K562 (cell line): ENCODE measurements at regions of chr3 and their contacts with region 1.

Region 1: GRCh38 chr3:72270072-72270681 is 485.2 kb upstream of the PROK2 start:
- DNase-seq: peak; percentile 68 to 88 (median 74)
- ATAC-seq: peak; percentile 82
- H3K4me3 ChIP-seq: no peak overlapping the region
- H3K27ac ChIP-seq: peak overlapping the region; percentile 78
- H3K4me1 ChIP-seq: peaks cover 13 to 56% of the 10 kb centered on the region in 2 experiments; a peak in 4 of 5 replicates
- H3K27me3 ChIP-seq: no peaks in the 10 kb centered on the region
- CTCF ChIP-seq: no peak
- EP300 ChIP-seq: peak; percentile 81
- POLR2A ChIP-seq: no peak
- RAD21 ChIP-seq: peak; percentile 24 to 34; a peak in 3 of 4 replicates

Region 2: GRCh38 chr3:71710906-71711494 is 559.2 kb before region 1 on chr3:
- CTCF ChIA-PET with region 1: no interaction called
- POLR2A ChIA-PET with region 1: no interaction called
- in situ Hi-C with region 1: no loop called
- intact Hi-C with region 1: loop called (anchors 10 kb)
- DNase-seq: peak; percentile 27 to 45 (median 40)
- ATAC-seq: peak; percentile 73
- H3K4me3 ChIP-seq: no peak overlapping the region
- H3K27ac ChIP-seq: no peak overlapping the region
- H3K4me1 ChIP-seq: no peaks in the 10 kb centered on the region
- H3K27me3 ChIP-seq: peaks cover 2 to 8% of the 10 kb centered on the region in 2 experiments; a peak in 3 of 5 replicates
- CTCF ChIP-seq: peak; percentile 40 to 74 (median 60); a peak in 5 of 6 replicates
- EP300 ChIP-seq: no peak
- POLR2A ChIP-seq: no peak
- RAD21 ChIP-seq: peak; percentile 81 to 86

Region 3: DNA sequence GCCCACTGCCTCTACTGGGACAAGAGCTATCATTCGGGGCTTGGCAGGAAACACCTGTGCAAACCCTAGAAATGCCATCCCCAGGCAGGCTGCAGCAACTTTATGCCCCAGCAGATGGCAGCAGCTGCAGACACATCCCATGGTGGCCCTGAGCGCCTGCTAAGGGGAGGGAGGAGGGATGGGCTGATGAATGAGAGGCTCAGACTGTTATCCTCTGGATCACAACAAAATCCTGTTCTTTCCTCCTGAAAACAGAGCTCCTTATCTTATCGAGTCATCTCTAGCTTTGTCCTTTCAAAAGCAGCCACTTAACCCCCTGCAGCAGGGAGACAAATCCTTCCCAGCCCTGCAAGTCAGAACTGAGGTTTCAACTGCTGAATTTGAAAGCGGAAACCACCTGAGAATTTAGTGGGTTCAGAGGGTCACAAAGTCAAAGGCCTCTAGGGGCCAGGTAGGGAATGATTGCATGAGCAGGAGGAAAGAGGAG is 394.7 kb before region 1 on chr3:
- CTCF ChIA-PET with region 1: interaction called, 3 read pairs
- POLR2A ChIA-PET with region 1: no interaction called
- in situ Hi-C with region 1: no loop called
- intact Hi-C with region 1: loop called (anchors 1 kb)
- DNase-seq: peak; percentile 61 to 70 (median 64)
- ATAC-seq: peak; percentile 96
- H3K4me3 ChIP-seq: no peak overlapping the region
- H3K27ac ChIP-seq: no peak overlapping the region
- H3K4me1 ChIP-seq: no peaks in the 10 kb centered on the region
- H3K27me3 ChIP-seq: peaks cover 0 to 2% of the 10 kb centered on the region in 2 experiments; a peak in 1 of 5 replicates
- CTCF ChIP-seq: peak; percentile 73 to 88 (median 83)
- EP300 ChIP-seq: peak; percentile 13; the same call in 1 of the 2 replicates
- POLR2A ChIP-seq: no peak
- RAD21 ChIP-seq: peak; percentile 90 to 91

Region 4: DNA sequence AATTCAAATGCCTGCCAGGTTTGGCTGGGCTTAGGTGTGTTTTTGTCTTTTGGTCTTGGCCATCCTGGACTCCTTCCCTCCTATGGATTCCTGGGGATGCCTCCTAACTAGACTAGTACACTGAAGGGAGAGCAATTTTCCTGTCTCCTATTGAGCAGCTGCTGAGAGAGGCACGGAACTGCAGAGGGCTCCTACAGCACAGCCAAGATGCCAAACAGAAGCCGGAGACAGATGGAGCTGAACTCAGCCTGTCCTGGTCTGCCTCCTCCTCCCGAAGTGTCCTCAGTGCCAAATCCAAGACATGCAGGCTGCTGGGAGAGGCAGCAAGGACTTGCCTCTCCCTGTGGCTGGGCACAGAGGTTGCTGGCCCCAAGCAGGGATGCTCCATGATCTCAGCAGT is 228.7 kb before region 1 on chr3:
- CTCF ChIA-PET with region 1: no interaction called
- POLR2A ChIA-PET with region 1: no interaction called
- in situ Hi-C with region 1: no loop called
- intact Hi-C with region 1: no loop called
- DNase-seq: no peak
- ATAC-seq: no peak; the same call in 2 of the 3 replicates
- H3K4me3 ChIP-seq: no peak overlapping the region
- H3K27ac ChIP-seq: no peak overlapping the region
- H3K4me1 ChIP-seq: peaks cover 0 to 14% of the 10 kb centered on the region in 2 experiments; a peak in 3 of 5 replicates
- H3K27me3 ChIP-seq: no peaks in the 10 kb centered on the region
- CTCF ChIP-seq: no peak
- EP300 ChIP-seq: no peak
- POLR2A ChIP-seq: no peak
- RAD21 ChIP-seq: no peak

Region 5: DNA sequence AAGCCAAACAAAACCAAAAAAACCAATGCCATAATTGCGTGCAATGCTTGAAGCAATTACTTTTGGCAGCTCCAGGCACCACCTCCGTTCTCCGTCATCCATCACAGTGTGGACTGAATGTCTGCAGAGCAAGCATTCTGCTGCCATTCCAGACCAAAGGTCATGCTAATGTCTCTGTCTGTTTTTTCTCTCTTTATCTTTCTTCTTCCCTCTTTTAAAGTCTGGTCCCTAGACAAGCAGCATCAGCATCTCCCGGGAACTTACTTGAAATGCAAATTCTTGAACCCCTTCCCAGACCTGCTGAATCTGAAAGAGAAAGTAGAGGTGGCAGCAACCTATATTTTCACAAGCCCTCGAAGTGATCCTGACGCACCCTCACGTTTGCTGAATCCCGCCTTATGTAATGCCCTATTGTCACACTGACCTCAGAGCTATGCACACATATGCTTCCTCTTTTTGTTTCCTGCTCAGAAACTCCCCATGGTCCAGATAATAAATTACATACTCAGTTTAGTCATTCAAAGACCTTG is 187.9 kb before region 1 on chr3:
- CTCF ChIA-PET with region 1: no interaction called
- POLR2A ChIA-PET with region 1: interaction called, 6 read pairs
- in situ Hi-C with region 1: no loop called
- intact Hi-C with region 1: loop called (anchors 5 kb)
- DNase-seq: no peak
- ATAC-seq: no peak
- H3K4me3 ChIP-seq: no peak overlapping the region
- H3K27ac ChIP-seq: no peak overlapping the region
- H3K4me1 ChIP-seq: peaks cover 24 to 47% of the 10 kb centered on the region in 2 experiments
- H3K27me3 ChIP-seq: no peaks in the 10 kb centered on the region
- CTCF ChIP-seq: no peak
- EP300 ChIP-seq: no peak
- POLR2A ChIP-seq: no peak
- RAD21 ChIP-seq: no peak

Region 6: GRCh38 chr3:72185549-72186399 is 84.4 kb before region 1 on chr3:
- CTCF ChIA-PET with region 1: no interaction called
- POLR2A ChIA-PET with region 1: no interaction called
- in situ Hi-C with region 1: no loop called
- intact Hi-C with region 1: loop called (anchors 5 kb)
- DNase-seq: peak; percentile 63 to 84 (median 72)
- ATAC-seq: peak; percentile 86
- H3K4me3 ChIP-seq: no peak overlapping the region
- H3K27ac ChIP-seq: peak overlapping the region; percentile 29; the same call in 2 of the 3 replicates
- H3K4me1 ChIP-seq: peaks cover 11 to 61% of the 10 kb centered on the region in 2 experiments
- H3K27me3 ChIP-seq: no peaks in the 10 kb centered on the region
- CTCF ChIP-seq: no peak
- EP300 ChIP-seq: peak; percentile 78
- POLR2A ChIP-seq: no peak
- RAD21 ChIP-seq: peak; percentile 13 to 19; a peak in 1 of 4 replicates

Region 7: GRCh38 chr3:72339116-72340030 is 69.2 kb after region 1 on chr3:
- CTCF ChIA-PET with region 1: no interaction called
- POLR2A ChIA-PET with region 1: no interaction called
- in situ Hi-C with region 1: no loop called
- intact Hi-C with region 1: loop called (anchors 5 kb)
- DNase-seq: peak; percentile 82 to 87 (median 84)
- ATAC-seq: peak; percentile 73
- H3K4me3 ChIP-seq: no peak overlapping the region
- H3K27ac ChIP-seq: peak overlapping the region; percentile 73; the same call in 2 of the 3 replicates
- H3K4me1 ChIP-seq: peaks cover 41 to 45% of the 10 kb centered on the region in 2 experiments
- H3K27me3 ChIP-seq: no peaks in the 10 kb centered on the region
- CTCF ChIP-seq: no peak
- EP300 ChIP-seq: peak; percentile 58; the same call in 1 of the 2 replicates
- POLR2A ChIP-seq: no peak
- RAD21 ChIP-seq: no peak

Region 8: DNA sequence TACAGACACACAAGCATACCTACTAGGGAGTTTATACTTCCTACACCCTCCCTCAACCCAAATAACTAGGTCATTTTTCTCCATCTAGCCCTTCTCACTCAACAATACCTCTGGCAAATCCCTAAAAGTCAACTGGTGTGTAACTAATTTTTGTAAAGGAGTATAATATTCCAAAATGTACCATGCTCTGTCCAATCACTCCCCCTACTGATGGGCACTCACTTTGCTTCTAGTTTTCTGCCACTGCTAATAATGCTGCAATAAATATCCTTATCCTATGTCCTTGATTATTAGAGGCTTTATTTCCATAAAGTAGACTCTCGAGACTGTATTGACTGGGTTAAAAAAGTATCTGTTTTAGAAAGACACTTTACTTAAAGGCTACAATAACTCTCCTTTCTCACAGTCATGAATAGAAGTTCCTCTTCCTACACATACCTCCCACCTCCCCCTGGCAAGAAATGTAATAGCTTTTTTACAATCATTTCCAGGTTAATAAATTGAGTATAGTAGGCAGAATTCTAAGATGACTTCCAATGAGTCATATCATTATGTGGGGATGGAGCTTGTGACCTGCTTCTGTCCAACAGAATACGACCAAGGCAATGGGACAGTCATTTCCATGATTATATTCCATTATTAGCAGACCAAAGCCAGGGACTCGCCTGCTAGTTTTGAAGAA is 548.1 kb after region 1 on chr3:
- CTCF ChIA-PET with region 1: no interaction called
- POLR2A ChIA-PET with region 1: no interaction called
- in situ Hi-C with region 1: no loop called
- intact Hi-C with region 1: loop called (anchors 10 kb)
- DNase-seq: peak in 1 of 4 experiments; percentile 12
- ATAC-seq: peak; percentile 50; the same call in 1 of the 3 replicates
- H3K4me3 ChIP-seq: no peak overlapping the region
- H3K27ac ChIP-seq: no peak overlapping the region
- H3K4me1 ChIP-seq: peaks cover 0 to 7% of the 10 kb centered on the region in 2 experiments; a peak in 2 of 5 replicates
- H3K27me3 ChIP-seq: no peaks in the 10 kb centered on the region
- CTCF ChIP-seq: peak in 2 of 3 experiments; percentile 60 to 71; a peak in 4 of 6 replicates
- EP300 ChIP-seq: no peak
- POLR2A ChIP-seq: no peak
- RAD21 ChIP-seq: peak; percentile 76 to 84